ENCODE measurements at regions of chr3 and their contacts with region 1.

Region 1: GRCh38 chr3:98182196-98182595 is 15.7 kb downstream of the OR5H15 start:
- DNase-seq: no peak
- ATAC-seq: no peak
- H3K4me3 ChIP-seq: no peak overlapping the region
- H3K27ac ChIP-seq: no peak overlapping the region
- H3K4me1 ChIP-seq: no peaks in the 10 kb centered on the region
- H3K27me3 ChIP-seq: no peaks in the 10 kb centered on the region
- CTCF ChIP-seq: no peak

Region 2: DNA sequence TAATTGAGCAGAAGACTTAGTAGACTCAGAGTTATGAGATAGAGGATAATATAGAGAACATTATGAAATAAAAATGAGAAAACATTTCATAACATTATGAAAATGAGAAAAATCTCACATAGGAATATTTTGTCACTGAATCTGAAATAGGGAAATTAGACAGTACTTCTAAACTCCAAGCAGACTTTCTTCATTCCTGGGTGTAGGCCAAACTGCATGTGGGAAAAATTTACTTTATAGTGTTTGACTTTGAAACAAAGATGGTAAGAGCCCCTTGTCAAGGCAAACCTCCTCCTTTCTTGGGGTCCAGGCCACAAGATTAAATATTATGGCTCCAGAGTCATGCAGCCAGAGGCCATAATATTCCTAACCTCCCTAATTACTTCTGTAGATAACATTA is 41.7 kb before region 1 on chr3:
- CTCF ChIA-PET with region 1: no interaction called
- POLR2A ChIA-PET with region 1: no interaction called
- in situ Hi-C with region 1: no loop called
- intact Hi-C with region 1: loop called (anchors 2 kb)
- DNase-seq: no peak
- ATAC-seq: no peak
- H3K4me3 ChIP-seq: no peak overlapping the region
- H3K27ac ChIP-seq: no peak overlapping the region
- H3K4me1 ChIP-seq: no peaks in the 10 kb centered on the region
- H3K27me3 ChIP-seq: no peaks in the 10 kb centered on the region
- CTCF ChIP-seq: no peak

Measured in Panc1 (cell line).